Activated naive CD8-positive, alpha-beta T cell treated with anti-CD3 and anti-CD28 coated beads, Interleukin-2, amount 10 ng/mL, durations not matched to agents 7 days and 5 days (primary cell): ENCODE measurements at regions of chr1 and their contacts with region 1.

Region 1: DNA sequence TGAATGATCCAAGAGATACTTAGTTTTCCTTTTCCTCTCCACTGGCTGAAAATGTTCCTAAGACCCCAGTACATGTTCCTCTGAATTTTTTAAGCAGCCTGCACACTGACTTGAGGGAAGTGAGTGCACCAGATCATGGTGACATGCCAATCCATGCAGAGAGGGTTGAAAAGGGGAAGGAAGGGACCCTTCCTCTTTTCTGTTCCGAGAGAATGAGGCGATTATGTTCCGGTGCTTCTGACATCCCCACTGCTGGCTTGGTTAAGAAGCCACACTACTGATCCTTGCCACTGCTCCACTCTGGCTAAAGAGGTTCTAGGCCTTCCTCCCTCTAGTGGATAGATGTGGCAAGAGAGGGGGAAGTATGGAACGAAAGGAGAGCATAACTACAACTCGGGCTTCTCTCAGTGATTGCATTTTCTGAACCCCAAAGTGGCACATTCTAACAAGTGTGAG is 1.8 kb upstream of the CYB5R1 start:
- DNase-seq: no peak
- ATAC-seq: peak; percentile 46
- H3K4me3 Mint-ChIP-seq: peak overlapping the region; percentile 1
- H3K27ac Mint-ChIP-seq: peak overlapping the region; percentile 0
- H3K4me1 Mint-ChIP-seq: peaks cover 22% of the 10 kb centered on the region
- H3K27me3 Mint-ChIP-seq: peaks cover 12% of the 10 kb centered on the region

Region 2: GRCh38 chr1:202926720-202927491 is 42.0 kb before region 1 on chr1 and contains the start of gene KLHL12:
- POLR2A ChIA-PET with region 1: interaction called, 11 read pairs
- DNase-seq: peak; percentile 95
- ATAC-seq: peak; percentile 94
- H3K4me3 Mint-ChIP-seq: peak within 1 kb of the TSS; percentile 96
- H3K27ac Mint-ChIP-seq: peak within 1 kb of the TSS; percentile 97
- H3K4me1 Mint-ChIP-seq: peaks cover 19% of the 10 kb centered on the region
- H3K27me3 Mint-ChIP-seq: peaks cover 2% of the 10 kb centered on the region
- total RNA-seq, gene KLHL12: 30.1 to 30.5 TPM

Region 3: GRCh38 chr1:203076031-203076511 is 107.2 kb after region 1 on chr1:
- POLR2A ChIA-PET with region 1: no interaction called
- DNase-seq: no peak
- ATAC-seq: peak; percentile 18
- H3K4me3 Mint-ChIP-seq: peak overlapping the region; percentile 65
- H3K27ac Mint-ChIP-seq: no peak overlapping the region
- H3K4me1 Mint-ChIP-seq: peaks cover 8% of the 10 kb centered on the region
- H3K27me3 Mint-ChIP-seq: peaks cover 16% of the 10 kb centered on the region